ENCODE measurements at regions of chr10 and their contacts with region 1.

Region 1: DNA sequence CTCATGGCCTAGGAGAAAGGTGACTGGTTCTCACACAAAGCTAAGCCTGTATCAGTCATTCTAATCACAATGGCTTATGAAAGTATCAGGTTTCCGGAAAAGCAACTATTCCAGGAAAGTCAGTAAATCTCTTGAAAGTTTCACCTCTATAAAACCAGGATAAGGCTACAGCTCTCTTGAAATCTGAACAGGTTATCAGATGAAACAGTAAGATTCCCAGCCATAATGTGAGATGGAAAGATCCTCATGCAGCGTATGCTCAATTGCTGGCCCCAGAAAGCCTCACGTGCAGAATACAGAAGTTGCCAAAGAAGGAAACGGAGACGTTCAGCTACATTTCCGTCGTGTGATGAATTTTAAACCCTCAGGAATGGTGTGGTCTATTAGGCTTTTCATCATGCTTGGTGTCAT is 90.0 kb downstream of the PFKFB3 start:
- DNase-seq: no peak
- H3K4me3 ChIP-seq: no peak overlapping the region
- H3K27ac ChIP-seq: no peak overlapping the region
- H3K4me1 ChIP-seq: peaks cover 18% of the 10 kb centered on the region
- H3K27me3 ChIP-seq: no peaks in the 10 kb centered on the region
- CTCF ChIP-seq: no peak
- POLR2A ChIP-seq: no peak

Region 2: DNA sequence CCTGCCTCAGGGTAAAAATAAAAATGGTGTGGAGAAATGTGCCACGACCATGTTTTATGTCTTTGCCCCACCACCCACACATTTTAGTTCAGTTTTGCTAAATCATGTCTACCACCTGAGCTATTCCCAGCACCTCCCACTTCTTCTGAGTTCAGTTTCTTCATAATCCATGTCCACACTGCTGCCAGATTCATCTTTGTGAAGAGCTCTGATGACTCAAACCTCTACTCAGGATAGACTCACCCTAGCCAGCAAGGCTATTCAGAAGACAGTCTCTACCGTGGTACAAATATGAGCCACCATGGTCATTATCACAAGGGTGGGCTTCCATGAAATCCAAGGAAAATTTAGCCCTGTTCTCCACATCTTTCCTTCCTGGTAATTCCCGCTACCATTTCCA is 518.4 kb after region 1 on chr10:
- intact Hi-C with region 1: loop called (anchors 5 kb)
- DNase-seq: no peak
- H3K4me3 ChIP-seq: no peak overlapping the region
- H3K27ac ChIP-seq: no peak overlapping the region
- H3K4me1 ChIP-seq: no peaks in the 10 kb centered on the region
- H3K27me3 ChIP-seq: no peaks in the 10 kb centered on the region
- CTCF ChIP-seq: no peak
- POLR2A ChIP-seq: no peak

Measured in vagina (tissue), 2 donors.